Dendritic cell treated with granulocyte-macrophage colony-stimulating factor and Interleukin-4, amounts not matched to agents 40 ng/mL and 50 ng/mL, for 4 days (primary cell): ENCODE measurements at regions of chr2 and their contacts with region 1.

Region 1: GRCh38 chr2:11829947-11830707 is 83.7 kb downstream of the LPIN1 start:
- H3K4me3 Mint-ChIP-seq: peak overlapping the region; percentile 35
- H3K27ac Mint-ChIP-seq: peak overlapping the region; percentile 26
- H3K4me1 Mint-ChIP-seq: peaks cover 47% of the 10 kb centered on the region
- H3K27me3 Mint-ChIP-seq: peaks cover 63% of the 10 kb centered on the region

Region 2: DNA sequence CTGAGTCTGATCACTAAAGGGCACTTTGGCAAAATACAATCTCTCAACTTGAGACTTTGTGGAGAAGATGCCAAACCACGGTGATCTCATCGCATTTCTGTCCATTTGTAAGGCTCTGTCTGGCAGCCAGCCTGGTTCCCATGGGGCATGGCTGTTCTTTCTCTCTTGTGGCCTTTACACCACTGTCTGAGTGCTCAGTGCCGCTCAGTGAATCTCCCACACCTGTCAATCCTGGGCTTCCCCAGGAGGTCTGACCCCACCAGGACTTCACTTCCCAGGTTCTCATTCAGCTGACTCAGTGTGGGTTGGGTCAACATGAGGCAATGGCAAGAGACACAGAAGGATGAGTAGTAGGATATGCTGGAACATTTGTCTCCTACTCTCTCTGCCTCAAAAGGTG is 789.8 kb after region 1 on chr2:
- intact Hi-C with region 1: loop called (anchors 10 kb)
- H3K4me3 Mint-ChIP-seq: no peak overlapping the region
- H3K27ac Mint-ChIP-seq: no peak overlapping the region
- H3K4me1 Mint-ChIP-seq: peaks cover 18% of the 10 kb centered on the region
- H3K27me3 Mint-ChIP-seq: peaks cover 21% of the 10 kb centered on the region

Region 3: GRCh38 chr2:12931186-12931844 is 1101.2 kb after region 1 on chr2:
- intact Hi-C with region 1: loop called (anchors 1 kb)
- H3K4me3 Mint-ChIP-seq: no peak overlapping the region
- H3K27ac Mint-ChIP-seq: no peak overlapping the region
- H3K4me1 Mint-ChIP-seq: no peaks in the 10 kb centered on the region
- H3K27me3 Mint-ChIP-seq: peaks cover 33% of the 10 kb centered on the region

Region 4: DNA sequence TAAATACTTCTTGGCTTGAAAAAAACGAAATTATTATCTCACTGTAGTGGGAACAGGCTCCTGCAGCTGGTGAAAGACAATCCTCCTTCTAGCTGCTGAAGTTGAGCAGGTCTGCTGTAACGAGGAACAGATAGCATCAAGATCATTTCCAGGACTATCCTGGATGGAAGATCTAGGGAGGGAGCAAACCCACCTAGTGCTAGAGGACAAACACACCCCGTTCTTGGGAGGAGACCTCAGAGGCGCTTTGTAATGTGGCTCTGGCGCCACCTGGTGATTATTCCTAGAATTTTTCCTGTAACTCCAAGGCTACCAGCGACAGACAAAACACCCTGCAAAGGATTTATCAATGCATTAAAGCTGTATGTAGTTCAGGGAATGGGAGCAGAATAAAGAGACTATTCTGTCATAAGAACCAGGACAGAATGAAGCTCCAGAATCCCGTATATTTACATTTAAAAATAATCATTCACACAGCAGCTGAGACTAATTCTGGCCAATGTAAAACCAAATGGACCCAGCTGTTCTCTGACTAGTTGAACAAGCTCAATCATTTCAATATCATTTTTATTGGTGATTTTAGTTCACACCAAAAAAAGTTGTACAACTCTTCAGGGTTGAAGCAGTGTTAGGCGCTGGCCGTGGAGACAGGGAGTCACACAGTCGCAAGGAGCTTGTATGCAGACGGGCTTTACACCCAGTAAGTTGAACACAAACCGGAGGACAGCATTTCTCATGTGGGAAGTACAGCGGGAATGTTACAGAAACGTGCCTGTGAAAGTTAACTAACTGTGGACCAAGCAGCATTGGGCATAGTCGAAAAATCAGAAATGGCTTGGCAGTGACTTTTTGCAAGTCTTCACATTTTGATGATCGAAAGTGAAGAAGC is 1176.9 kb after region 1 on chr2:
- intact Hi-C with region 1: loop called (anchors 5 kb)
- H3K4me3 Mint-ChIP-seq: no peak overlapping the region
- H3K27ac Mint-ChIP-seq: no peak overlapping the region
- H3K4me1 Mint-ChIP-seq: peaks cover 11% of the 10 kb centered on the region
- H3K27me3 Mint-ChIP-seq: peaks cover 25% of the 10 kb centered on the region